GM23248 (cell line): ENCODE measurements at regions of chr20 and their contacts with region 1.

Region 1: DNA sequence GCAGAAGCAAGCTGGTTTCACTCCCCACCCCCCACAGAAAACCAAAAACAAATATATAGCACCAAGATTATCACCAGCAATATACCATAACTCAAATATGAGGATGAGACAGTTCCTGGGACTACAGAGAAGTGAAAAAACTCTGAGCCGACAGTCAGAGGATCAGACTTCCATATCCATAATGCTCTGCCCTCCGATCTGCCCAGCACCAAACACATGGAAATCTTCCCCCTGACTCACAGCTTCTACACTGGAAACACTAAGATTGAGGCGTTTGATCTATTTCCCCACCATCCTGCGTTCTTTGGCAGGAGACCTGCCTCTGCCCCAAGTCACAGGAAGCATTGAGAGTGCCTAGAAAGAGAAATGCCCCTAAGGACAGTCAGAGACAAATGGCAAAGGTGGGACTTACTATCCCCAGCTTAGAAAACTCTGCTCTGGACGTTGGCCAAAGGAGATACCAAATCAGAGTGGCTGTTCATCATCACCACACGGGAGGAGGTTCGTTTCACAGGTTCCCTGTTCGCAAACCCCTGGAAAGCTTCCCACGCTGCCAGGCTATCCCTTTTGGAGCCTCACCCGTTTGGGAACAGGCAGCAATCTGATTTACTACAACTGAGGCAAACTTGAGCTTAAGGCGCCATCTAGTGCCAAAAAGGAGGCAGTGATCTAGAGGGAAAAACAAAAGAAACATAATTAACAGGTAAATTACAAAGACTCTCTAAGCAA is 48.7 kb upstream of the SRSF6 start:
- DNase-seq: peak; percentile 70
- H3K4me3 ChIP-seq: no peak overlapping the region
- H3K27ac ChIP-seq: no peak overlapping the region
- H3K4me1 ChIP-seq: no peaks in the 10 kb centered on the region
- H3K27me3 ChIP-seq: peaks cover 6% of the 10 kb centered on the region

Region 2: GRCh38 chr20:41738604-41739206 is 1670.3 kb before region 1 on chr20:
- in situ Hi-C with region 1: loop called (anchors 25 kb)
- DNase-seq: peak; percentile 75
- H3K4me3 ChIP-seq: no peak overlapping the region
- H3K27ac ChIP-seq: no peak overlapping the region
- H3K4me1 ChIP-seq: no peaks in the 10 kb centered on the region
- H3K27me3 ChIP-seq: no peaks in the 10 kb centered on the region

Region 3: GRCh38 chr20:42740226-42740870 is 668.7 kb before region 1 on chr20:
- in situ Hi-C with region 1: loop called (anchors 25 kb)
- DNase-seq: no peak
- H3K4me3 ChIP-seq: no peak overlapping the region
- H3K27ac ChIP-seq: no peak overlapping the region
- H3K4me1 ChIP-seq: no peaks in the 10 kb centered on the region
- H3K27me3 ChIP-seq: no peaks in the 10 kb centered on the region

Region 4: DNA sequence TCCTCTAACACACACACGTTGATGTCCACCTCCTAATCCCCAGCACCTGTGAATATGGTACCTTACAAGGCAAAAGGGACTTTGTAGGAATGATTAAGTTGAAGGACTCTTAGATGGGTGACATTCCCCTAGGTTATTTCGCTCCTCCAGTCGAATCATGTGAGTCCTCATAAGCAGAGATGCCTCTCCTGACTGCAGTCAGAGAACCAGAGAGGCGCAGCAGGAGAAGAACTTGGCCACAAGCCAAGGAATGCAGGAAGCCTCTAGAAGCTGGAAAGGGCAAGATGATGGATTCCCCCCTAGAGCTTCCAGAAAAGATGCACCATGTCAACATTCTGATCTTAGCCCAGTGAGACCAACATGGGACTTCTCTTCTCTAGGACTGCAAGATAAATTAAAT is 86.2 kb before region 1 on chr20:
- in situ Hi-C with region 1: no loop called
- DNase-seq: peak; percentile 27
- H3K4me3 ChIP-seq: no peak overlapping the region
- H3K27ac ChIP-seq: no peak overlapping the region
- H3K4me1 ChIP-seq: no peaks in the 10 kb centered on the region
- H3K27me3 ChIP-seq: no peaks in the 10 kb centered on the region

Region 5: GRCh38 chr20:43345676-43346075 is 63.3 kb before region 1 on chr20:
- in situ Hi-C with region 1: no loop called
- DNase-seq: no peak
- H3K4me3 ChIP-seq: no peak overlapping the region
- H3K27ac ChIP-seq: no peak overlapping the region
- H3K4me1 ChIP-seq: no peaks in the 10 kb centered on the region
- H3K27me3 ChIP-seq: no peaks in the 10 kb centered on the region